ENCODE measurements at regions of chr13 and their contacts with region 1.

Region 1: DNA sequence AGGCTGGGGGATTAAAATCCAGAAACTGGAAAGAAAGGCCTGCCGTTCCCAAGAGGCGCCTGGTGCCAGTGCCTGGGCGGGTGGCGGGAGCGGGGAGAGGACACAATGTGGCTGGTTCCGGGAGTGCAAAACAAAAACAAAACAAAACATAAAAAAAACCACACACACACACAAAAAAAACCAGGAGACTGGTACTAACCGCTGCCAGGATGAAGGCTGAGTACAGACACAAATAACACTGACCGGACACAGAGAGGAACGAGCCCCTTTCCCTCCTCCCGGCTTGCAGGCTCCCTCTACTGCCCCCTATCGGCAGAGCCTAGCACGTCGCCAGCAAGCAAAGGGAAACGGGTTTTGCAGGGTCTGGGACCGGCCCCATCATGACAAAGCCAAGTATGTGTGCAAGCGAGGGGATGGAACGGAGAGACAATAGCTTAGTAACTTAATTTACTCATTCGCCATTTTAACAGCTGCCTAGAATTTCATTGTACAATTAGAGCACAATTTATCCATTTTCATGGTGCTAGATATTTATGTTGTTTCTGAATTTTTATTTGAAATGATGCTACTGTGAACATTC is 17.9 kb upstream of the ZDHHC20 start:
- DNase-seq: peak; percentile 80 to 87
- H3K4me3 ChIP-seq: peak overlapping the region in 1 of 3 donors; percentile 6
- H3K27ac ChIP-seq: peak overlapping the region; percentile 8 to 57 (median 42)
- H3K4me1 ChIP-seq: no peaks in the 10 kb centered on the region
- H3K27me3 ChIP-seq: no peaks in the 10 kb centered on the region
- CTCF ChIP-seq: peak; percentile 89 to 95 (median 94)
- POLR2A ChIP-seq: no peak

Region 2: DNA sequence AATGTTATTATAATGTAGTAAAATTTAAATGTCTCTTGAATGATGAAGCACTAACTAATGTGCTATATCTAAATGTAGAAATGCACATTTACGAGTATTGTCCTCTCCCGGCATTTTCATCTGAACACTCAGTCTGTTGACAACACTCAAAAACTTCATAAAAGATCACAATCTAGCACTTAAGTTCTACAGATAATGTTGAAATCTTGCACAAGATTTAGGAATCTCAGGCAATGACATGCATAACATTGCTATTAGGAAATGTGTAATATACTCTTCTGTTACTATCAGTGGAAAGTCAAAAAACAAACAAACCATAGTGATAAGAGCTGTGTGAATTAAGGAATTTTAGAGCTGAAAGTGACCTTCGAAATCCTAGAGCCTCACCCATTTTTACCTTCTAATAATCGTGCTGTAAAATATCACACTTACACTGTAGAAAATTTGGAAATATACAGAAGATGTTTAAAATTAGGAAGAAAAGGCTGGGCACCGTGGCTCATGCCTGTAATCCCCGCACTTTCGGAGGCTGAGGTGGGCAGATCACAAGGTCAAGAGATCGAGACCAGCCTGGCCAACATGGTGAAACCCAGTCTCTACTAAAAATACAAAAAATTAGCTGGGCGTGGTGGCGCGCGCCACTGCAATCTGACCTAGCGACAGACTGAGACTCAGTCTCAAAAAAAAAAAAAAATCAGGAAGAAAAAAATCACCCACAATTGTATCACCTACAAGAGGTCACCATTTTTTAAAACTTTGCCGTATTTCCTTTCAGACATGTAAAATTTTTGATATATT is 536.7 kb before region 1 on chr13:
- intact Hi-C with region 1: loop called (anchors 5 kb)
- DNase-seq: no peak
- H3K4me3 ChIP-seq: no peak overlapping the region
- H3K27ac ChIP-seq: no peak overlapping the region
- H3K4me1 ChIP-seq: peaks cover 0 to 5% of the 10 kb centered on the region in 2 donors
- H3K27me3 ChIP-seq: no peaks in the 10 kb centered on the region
- CTCF ChIP-seq: no peak
- POLR2A ChIP-seq: no peak

Region 3: DNA sequence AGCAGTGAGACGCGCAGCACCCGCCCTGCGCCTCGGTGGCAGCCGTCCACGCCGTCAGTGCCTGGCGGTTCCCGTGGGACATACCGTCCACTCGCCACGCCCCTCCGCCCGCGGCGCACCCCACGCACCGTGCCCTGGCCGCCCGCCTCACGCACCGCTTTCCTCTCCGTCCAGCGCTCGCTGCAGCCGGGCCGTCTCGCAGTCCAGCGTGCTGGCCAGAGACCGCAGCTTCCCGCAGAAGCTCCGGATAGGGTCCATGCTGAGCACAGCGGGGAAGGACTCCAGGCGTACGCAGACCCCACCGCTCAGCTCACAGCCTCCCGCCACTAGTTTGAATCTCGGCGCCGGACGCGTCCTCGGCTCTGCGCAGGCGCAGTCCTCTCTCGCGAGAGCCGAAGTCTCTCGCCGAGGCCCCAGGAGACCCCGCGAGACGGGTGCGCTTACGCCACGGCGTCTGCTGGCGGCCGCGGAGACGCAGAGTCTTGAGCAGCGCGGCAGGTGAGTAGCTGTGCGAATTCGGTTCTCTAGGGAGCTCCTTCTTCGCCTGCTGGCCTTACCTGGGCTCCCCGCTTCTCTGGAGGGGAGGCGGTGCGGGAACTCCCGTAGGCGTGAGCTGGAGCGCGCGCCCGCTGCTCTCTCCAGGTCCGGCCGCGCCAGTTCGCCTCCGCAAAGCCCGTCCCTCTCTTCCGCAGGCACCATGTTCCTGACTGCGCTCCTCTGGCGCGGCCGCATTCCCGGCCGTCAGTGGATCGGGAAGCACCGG is 300.6 kb before region 1 on chr13 and contains the starts of genes MRPL57 and SKA3:
- intact Hi-C with region 1: loop called (anchors 5 kb)
- DNase-seq: peak; percentile 93 to 94
- H3K4me3 ChIP-seq: peak within 1 kb of the TSS; percentile 24 to 76 (median 72)
- H3K27ac ChIP-seq: peak within 1 kb of the TSS; percentile 86 to 97 (median 94)
- H3K4me1 ChIP-seq: peaks cover 6 to 16% of the 10 kb centered on the region in 2 donors
- H3K27me3 ChIP-seq: no peaks in the 10 kb centered on the region
- CTCF ChIP-seq: peak in 3 of 6 experiments; percentile 29 to 50 (median 36)
- POLR2A ChIP-seq: peak; percentile 51 to 96
- total RNA-seq, gene MRPL57: 23.5 to 65.8 (median 33.2) TPM
- total RNA-seq, gene SKA3: 1.3 to 1.4 TPM in 2 of 4 donors, not detected in the others

Region 4: GRCh38 chr13:21297914-21298831 is 178.8 kb before region 1 on chr13:
- intact Hi-C with region 1: loop called (anchors 5 kb)
- DNase-seq: peak; percentile 86 to 87
- H3K4me3 ChIP-seq: peak overlapping the region; percentile 28 to 91 (median 86)
- H3K27ac ChIP-seq: peak overlapping the region; percentile 58 to 68 (median 62)
- H3K4me1 ChIP-seq: peaks cover 15 to 22% of the 10 kb centered on the region in 2 donors
- H3K27me3 ChIP-seq: no peaks in the 10 kb centered on the region
- CTCF ChIP-seq: peak; percentile 77 to 99 (median 90)
- POLR2A ChIP-seq: peak in 1 of 2 donors; percentile 73

Measured in thyroid gland (tissue), 4 donors.